ENCODE measurements at regions of chr20 and their contacts with region 1.

Region 1: DNA sequence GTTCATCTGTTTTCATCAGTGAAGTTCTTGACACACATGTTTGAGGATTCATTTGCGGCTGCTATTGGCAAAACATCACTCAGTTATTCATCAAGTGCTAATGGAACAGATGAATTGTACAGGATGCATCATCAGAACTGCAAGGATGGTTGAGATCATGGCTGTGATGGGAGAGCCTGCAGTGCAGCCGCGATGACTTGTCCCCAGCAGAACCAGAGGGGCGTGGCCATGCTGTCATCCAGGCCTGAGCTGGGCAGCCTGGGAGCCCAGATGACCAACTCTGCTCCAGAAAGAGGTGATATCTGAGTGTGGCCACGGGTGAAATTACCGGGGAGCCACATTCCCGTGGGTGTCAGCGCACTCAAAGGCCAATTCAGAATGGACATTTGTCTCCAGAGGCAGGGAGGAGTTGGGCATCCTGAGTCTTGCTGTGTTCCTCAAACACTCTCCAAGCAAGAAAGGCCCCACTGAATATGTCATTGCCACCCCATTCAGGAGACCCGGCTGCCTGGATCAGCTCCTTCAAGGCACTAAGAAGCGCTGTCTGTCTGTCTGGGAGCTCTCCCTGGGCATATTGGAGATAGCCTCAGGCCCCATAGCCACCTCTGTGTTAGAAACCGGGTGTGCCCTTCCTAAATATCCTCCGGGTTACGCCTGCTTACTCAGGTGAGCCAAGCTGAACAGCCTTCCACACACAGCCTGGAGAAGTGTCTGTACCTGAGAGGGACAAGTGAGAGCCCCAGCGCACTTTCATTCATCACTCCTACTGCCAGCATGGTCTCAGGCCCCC is 66.7 kb downstream of the SYNDIG1 start:
- DNase-seq: no peak

Region 2: GRCh38 chr20:23562721-23563342 is 973.3 kb before region 1 on chr20:
- intact Hi-C with region 1: loop called in 1 of 2 experiments (anchors 5 kb)
- DNase-seq: peak; percentile 35

Region 3: DNA sequence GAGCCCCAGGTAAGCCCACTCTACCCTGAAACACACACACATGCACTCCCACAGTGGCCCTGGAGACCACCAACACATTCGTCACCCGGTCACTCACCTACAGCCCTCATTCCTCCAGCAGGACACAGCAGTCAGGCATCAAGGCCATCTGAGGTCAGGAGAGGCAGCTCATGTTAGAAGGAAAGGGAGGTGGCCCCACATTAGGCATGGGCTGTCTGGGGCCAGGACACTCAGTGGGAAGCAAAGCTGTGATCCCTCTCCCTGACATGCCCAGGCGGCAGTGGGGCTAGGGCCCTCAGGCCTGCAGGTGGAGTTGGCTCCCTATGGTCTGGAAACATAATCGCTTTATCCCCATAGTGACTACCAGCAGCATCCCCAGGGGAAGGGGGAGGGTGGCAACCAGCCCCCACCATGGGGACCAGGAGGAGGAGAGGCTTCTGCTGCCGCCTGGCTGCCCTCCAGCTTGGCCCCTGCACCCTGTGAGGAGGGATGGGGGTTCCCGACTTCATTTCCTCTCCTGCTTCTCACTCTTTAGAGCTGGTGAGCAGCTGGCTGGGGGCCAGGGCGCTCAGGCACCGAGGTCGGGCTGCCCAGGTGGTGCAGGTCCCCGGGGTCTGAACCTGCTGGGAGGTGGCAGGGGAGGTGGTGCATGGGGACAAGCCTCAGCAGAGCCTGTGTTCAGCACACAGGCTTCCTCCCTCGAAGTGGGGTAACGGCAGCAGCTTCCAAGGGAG is 336.3 kb after region 1 on chr20:
- intact Hi-C with region 1: no loop called
- DNase-seq: no peak